ENCODE measurements at regions of chr16 and their contacts with region 1.

Region 1: GRCh38 chr16:66608241-66609138 is 4.0 kb downstream of the CMTM3 start:
- DNase-seq: peak; percentile 77
- H3K4me3 ChIP-seq: no peak overlapping the region
- H3K27ac ChIP-seq: peak overlapping the region; percentile 28
- H3K4me1 ChIP-seq: peaks cover 17% of the 10 kb centered on the region
- H3K27me3 ChIP-seq: no peaks in the 10 kb centered on the region
- CTCF ChIP-seq: peak; percentile 99
- POLR2A ChIP-seq: no peak

Region 2: DNA sequence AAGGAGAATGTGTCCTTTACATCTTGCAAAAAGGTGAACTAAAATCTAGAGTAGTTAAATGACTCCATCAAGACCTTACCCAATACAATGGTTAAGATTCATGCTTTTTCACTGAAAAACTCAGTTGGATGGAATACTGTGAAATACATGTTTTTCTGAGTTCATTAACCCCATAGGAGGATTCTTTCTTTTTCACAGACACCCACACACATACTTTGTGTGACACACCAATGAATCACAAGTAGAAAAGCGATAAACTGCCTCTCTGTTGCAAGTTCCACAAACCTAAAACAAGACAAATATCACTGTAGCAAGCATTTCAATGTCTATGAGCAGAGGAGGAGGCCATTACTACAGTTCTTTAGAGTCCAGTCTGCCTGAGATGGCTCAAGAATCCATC is 500.8 kb before region 1 on chr16:
- CTCF ChIA-PET with region 1: no interaction called
- POLR2A ChIA-PET with region 1: no interaction called
- dilution Hi-C with region 1: no loop called
- intact Hi-C with region 1: no loop called
- DNase-seq: no peak
- H3K4me3 ChIP-seq: no peak overlapping the region
- H3K27ac ChIP-seq: no peak overlapping the region
- H3K4me1 ChIP-seq: no peaks in the 10 kb centered on the region
- H3K27me3 ChIP-seq: no peaks in the 10 kb centered on the region
- CTCF ChIP-seq: no peak
- POLR2A ChIP-seq: no peak

Region 3: GRCh38 chr16:66389256-66390176 is 219.0 kb before region 1 on chr16:
- CTCF ChIA-PET with region 1: no interaction called
- POLR2A ChIA-PET with region 1: no interaction called
- dilution Hi-C with region 1: no loop called
- intact Hi-C with region 1: no loop called
- DNase-seq: no peak
- H3K4me3 ChIP-seq: no peak overlapping the region
- H3K27ac ChIP-seq: no peak overlapping the region
- H3K4me1 ChIP-seq: peaks cover 2% of the 10 kb centered on the region
- H3K27me3 ChIP-seq: no peaks in the 10 kb centered on the region
- CTCF ChIP-seq: no peak
- POLR2A ChIP-seq: peak; percentile 40

Region 4: DNA sequence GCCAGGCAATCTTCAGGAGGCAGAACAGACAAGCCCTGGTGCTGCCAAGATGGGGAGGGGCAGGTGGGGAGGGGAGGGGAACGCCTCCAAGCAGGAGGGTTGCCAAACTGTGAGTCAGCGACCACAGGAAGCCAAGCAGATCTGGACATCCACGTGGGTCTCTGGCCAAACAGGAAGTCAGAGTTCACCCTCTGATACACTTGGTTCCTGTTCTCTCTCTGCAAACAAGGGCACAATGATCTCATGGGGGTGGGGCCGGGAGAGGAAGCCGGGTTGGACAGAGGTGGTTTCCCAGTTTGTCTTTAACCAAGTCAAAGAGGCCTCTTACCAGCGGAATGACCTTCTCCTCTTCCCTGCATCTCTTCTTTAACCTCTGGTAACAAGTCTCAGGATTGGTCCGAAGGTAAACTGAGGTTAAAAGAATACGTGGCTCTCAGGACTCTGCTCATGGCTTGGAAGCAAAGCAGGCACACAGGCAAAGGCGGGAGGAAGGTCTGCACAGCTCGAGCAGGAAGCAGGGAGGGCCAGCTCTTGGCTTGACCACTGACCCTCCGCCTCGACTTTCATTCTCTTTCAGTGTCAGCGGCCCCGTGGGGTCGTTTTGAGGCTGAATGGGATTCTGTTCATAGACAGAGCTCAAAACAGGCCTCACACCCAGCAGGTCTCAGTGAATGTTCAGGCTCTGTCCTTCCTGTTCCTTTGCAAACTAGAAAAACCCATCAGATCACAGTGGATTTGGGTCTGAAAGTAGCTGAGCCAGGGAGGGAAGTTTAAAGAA is 91.5 kb before region 1 on chr16:
- CTCF ChIA-PET with region 1: interaction called, 14 read pairs
- POLR2A ChIA-PET with region 1: no interaction called
- dilution Hi-C with region 1: no loop called
- intact Hi-C with region 1: loop called (anchors 1 kb)
- DNase-seq: peak; percentile 100
- H3K4me3 ChIP-seq: peak overlapping the region in 1 of 3 experiments; percentile 0
- H3K27ac ChIP-seq: peak overlapping the region; percentile 97
- H3K4me1 ChIP-seq: peaks cover 81% of the 10 kb centered on the region
- H3K27me3 ChIP-seq: no peaks in the 10 kb centered on the region
- CTCF ChIP-seq: no peak
- POLR2A ChIP-seq: peak; percentile 83

Region 5: DNA sequence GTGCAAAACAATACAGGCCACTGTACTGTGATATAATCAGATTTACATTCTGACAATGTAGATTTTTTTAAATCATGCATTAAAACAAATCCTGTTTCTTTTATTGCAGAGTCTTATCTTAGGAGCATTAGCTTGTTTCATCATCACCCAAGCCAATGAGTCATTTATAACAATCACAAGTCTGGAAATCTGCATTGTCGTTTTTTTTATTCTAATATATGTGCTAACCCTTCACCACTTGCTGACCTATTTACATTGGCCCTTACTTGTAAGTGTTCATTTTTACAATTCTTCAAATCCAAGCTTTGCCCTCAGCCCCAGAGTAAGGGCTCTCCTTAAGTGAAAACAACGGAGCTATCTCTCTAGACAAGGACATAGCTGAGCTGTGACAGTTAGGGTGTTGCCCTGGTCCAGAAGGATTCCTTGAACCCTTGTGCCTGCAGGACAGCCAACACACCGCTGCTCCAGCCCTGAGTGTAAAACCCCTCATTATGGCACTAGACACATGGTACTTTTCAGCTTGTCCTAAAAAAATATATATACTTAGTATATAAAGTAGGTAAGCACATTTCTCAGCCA is 38.6 kb before region 1 on chr16:
- CTCF ChIA-PET with region 1: interaction called, 16 read pairs
- POLR2A ChIA-PET with region 1: no interaction called
- dilution Hi-C with region 1: no loop called
- intact Hi-C with region 1: no loop called
- DNase-seq: peak; percentile 76
- H3K4me3 ChIP-seq: no peak overlapping the region
- H3K27ac ChIP-seq: peak overlapping the region; percentile 79
- H3K4me1 ChIP-seq: peaks cover 34% of the 10 kb centered on the region
- H3K27me3 ChIP-seq: no peaks in the 10 kb centered on the region
- CTCF ChIP-seq: no peak
- POLR2A ChIP-seq: no peak

Region 6: GRCh38 chr16:66635406-66635805 is 26.9 kb after region 1 on chr16:
- CTCF ChIA-PET with region 1: interaction called, 16 read pairs
- POLR2A ChIA-PET with region 1: no interaction called
- dilution Hi-C with region 1: no loop called
- intact Hi-C with region 1: no loop called
- DNase-seq: no peak
- H3K4me3 ChIP-seq: no peak overlapping the region
- H3K27ac ChIP-seq: no peak overlapping the region
- H3K4me1 ChIP-seq: no peaks in the 10 kb centered on the region
- H3K27me3 ChIP-seq: no peaks in the 10 kb centered on the region
- CTCF ChIP-seq: no peak
- POLR2A ChIP-seq: no peak

Region 7: DNA sequence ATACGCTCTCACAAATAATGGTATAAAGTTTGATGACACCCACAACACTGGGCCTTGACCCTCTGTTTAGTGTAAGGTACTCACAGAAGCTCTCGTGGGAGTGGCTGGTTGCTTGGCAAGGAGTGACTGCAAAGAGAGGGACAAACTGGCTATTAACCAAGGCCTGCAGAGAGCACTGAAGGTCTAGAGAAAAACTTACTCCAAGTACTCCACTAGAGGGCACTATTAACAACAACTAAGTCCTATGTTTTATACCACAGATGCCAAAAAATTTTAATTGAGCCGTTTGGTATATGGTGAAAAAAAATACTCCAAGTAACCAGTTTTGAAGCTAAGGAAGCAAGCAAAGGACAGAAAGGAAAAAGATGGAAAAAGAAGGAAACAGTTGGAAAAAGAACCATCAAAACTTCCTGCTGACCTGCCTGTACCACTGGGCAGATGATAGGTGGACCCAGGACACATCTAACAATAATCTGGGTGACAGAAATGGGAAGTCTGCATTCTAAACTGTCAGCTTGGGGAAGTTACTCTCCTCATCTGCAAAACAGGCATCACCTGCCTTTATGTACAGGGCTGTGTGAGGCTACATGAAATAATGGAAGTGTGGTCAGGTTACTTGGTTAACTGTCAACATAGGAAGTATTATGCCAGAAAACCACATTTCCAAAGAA is 119.8 kb after region 1 on chr16:
- CTCF ChIA-PET with region 1: interaction called, 14 read pairs
- POLR2A ChIA-PET with region 1: no interaction called
- dilution Hi-C with region 1: no loop called
- intact Hi-C with region 1: no loop called
- DNase-seq: peak; percentile 70
- H3K4me3 ChIP-seq: no peak overlapping the region
- H3K27ac ChIP-seq: no peak overlapping the region
- H3K4me1 ChIP-seq: no peaks in the 10 kb centered on the region
- H3K27me3 ChIP-seq: no peaks in the 10 kb centered on the region
- CTCF ChIP-seq: peak; percentile 43 to 48
- POLR2A ChIP-seq: no peak

Region 8: GRCh38 chr16:66872943-66873684 is 264.6 kb after region 1 on chr16:
- CTCF ChIA-PET with region 1: interaction called, 171 read pairs
- POLR2A ChIA-PET with region 1: no interaction called
- dilution Hi-C with region 1: no loop called
- intact Hi-C with region 1: no loop called
- DNase-seq: peak; percentile 96
- H3K4me3 ChIP-seq: no peak overlapping the region
- H3K27ac ChIP-seq: no peak overlapping the region
- H3K4me1 ChIP-seq: peaks cover 12% of the 10 kb centered on the region
- H3K27me3 ChIP-seq: peaks cover 0 to 2% of the 10 kb centered on the region in 2 experiments
- CTCF ChIP-seq: peak; percentile 99
- POLR2A ChIP-seq: peak; percentile 58

Measured in endothelial cell of umbilical vein (primary cell).